T-cell (primary cell): ENCODE measurements at regions of chr7 and their contacts with region 1.

Region 1: GRCh38 chr7:116180302-116180701 is 30.0 kb upstream of the TES start:
- DNase-seq: peak in 18 of 35 experiments; percentile 3 to 76 (median 18)
- ATAC-seq: peak; percentile 79 to 81 (median 80)
- H3K4me3 ChIP-seq: no peak overlapping the region
- H3K4me3 Mint-ChIP-seq: no peak overlapping the region
- H3K27ac ChIP-seq: no peak overlapping the region
- H3K27ac Mint-ChIP-seq: no peak overlapping the region
- H3K4me1 ChIP-seq: no peaks in the 10 kb centered on the region
- H3K4me1 Mint-ChIP-seq: peaks cover 0 to 8% (median 8%) of the 10 kb centered on the region in 3 donors
- H3K27me3 ChIP-seq: no peaks in the 10 kb centered on the region
- H3K27me3 Mint-ChIP-seq: no peaks in the 10 kb centered on the region

Region 2: GRCh38 chr7:115293628-115294240 is 886.6 kb before region 1 on chr7:
- CTCF ChIA-PET with region 1: no interaction called
- POLR2A ChIA-PET with region 1: no interaction called
- DNase-seq: no peak
- ATAC-seq: no peak
- H3K4me3 ChIP-seq: no peak overlapping the region
- H3K4me3 Mint-ChIP-seq: no peak overlapping the region
- H3K27ac ChIP-seq: no peak overlapping the region
- H3K27ac Mint-ChIP-seq: no peak overlapping the region
- H3K4me1 ChIP-seq: no peaks in the 10 kb centered on the region
- H3K4me1 Mint-ChIP-seq: no peaks in the 10 kb centered on the region
- H3K27me3 ChIP-seq: peaks cover 0 to 3% of the 10 kb centered on the region in 2 experiments
- H3K27me3 Mint-ChIP-seq: peaks cover 1 to 4% of the 10 kb centered on the region in 2 donors

Region 3: GRCh38 chr7:115851291-115851690 is 329.0 kb before region 1 on chr7:
- CTCF ChIA-PET with region 1: no interaction called
- POLR2A ChIA-PET with region 1: no interaction called
- DNase-seq: peak in 1 of 35 experiments; percentile 41
- ATAC-seq: no peak
- H3K4me3 ChIP-seq: no peak overlapping the region
- H3K4me3 Mint-ChIP-seq: no peak overlapping the region
- H3K27ac ChIP-seq: no peak overlapping the region
- H3K27ac Mint-ChIP-seq: no peak overlapping the region
- H3K4me1 ChIP-seq: no peaks in the 10 kb centered on the region
- H3K4me1 Mint-ChIP-seq: no peaks in the 10 kb centered on the region
- H3K27me3 ChIP-seq: no peaks in the 10 kb centered on the region
- H3K27me3 Mint-ChIP-seq: peaks cover 1 to 8% of the 10 kb centered on the region in 2 donors

Region 4: DNA sequence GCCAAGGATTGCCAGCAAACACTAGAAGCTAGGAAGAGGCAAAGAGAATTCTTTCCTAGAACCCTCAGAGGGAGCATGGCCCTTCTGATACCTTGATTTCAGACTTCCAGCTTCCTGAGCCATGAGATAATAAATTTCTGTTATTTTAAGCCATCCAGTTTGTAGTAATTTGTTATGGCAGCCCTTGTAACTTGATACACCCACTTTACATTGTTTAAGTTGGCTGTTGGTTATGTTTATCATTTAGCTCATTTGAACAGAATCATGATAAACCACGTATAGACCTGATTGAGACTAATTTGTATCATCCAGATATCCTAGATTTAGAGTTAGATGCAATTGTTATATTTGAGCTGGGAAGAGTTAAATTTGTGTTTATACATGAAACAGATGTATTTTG is 20.7 kb after region 1 on chr7:
- CTCF ChIA-PET with region 1: interaction called, 4 to 10 read pairs
- POLR2A ChIA-PET with region 1: no interaction called
- DNase-seq: no peak
- ATAC-seq: no peak
- H3K4me3 ChIP-seq: no peak overlapping the region
- H3K4me3 Mint-ChIP-seq: no peak overlapping the region
- H3K27ac ChIP-seq: no peak overlapping the region
- H3K27ac Mint-ChIP-seq: no peak overlapping the region
- H3K4me1 ChIP-seq: no peaks in the 10 kb centered on the region
- H3K4me1 Mint-ChIP-seq: no peaks in the 10 kb centered on the region
- H3K27me3 ChIP-seq: no peaks in the 10 kb centered on the region
- H3K27me3 Mint-ChIP-seq: no peaks in the 10 kb centered on the region

Region 5: GRCh38 chr7:116218051-116218645 is 37.8 kb after region 1 on chr7:
- CTCF ChIA-PET with region 1: interaction called, 7 to 14 read pairs
- POLR2A ChIA-PET with region 1: interaction called, 3 read pairs
- DNase-seq: no peak
- ATAC-seq: no peak
- H3K4me3 ChIP-seq: no peak overlapping the region
- H3K4me3 Mint-ChIP-seq: peak overlapping the region; percentile 1 to 61 (median 28)
- H3K27ac ChIP-seq: no peak overlapping the region
- H3K27ac Mint-ChIP-seq: peak overlapping the region; percentile 66 to 75
- H3K4me1 ChIP-seq: peaks cover 23 to 78% of the 10 kb centered on the region in 2 experiments
- H3K4me1 Mint-ChIP-seq: peaks cover 91 to 92% (median 92%) of the 10 kb centered on the region in 3 donors
- H3K27me3 ChIP-seq: no peaks in the 10 kb centered on the region
- H3K27me3 Mint-ChIP-seq: no peaks in the 10 kb centered on the region

Region 6: GRCh38 chr7:116236020-116236630 is 55.8 kb after region 1 on chr7:
- CTCF ChIA-PET with region 1: interaction called, 243 to 450 read pairs
- POLR2A ChIA-PET with region 1: interaction called in 1 of 2 experiments, 3 read pairs
- DNase-seq: peak in 32 of 35 experiments; percentile 16 to 81 (median 58)
- ATAC-seq: peak; percentile 62 to 79 (median 70)
- H3K4me3 ChIP-seq: no peak overlapping the region
- H3K4me3 Mint-ChIP-seq: no peak overlapping the region
- H3K27ac ChIP-seq: no peak overlapping the region
- H3K27ac Mint-ChIP-seq: no peak overlapping the region
- H3K4me1 ChIP-seq: peaks cover 16 to 31% of the 10 kb centered on the region in 2 experiments
- H3K4me1 Mint-ChIP-seq: peaks cover 74 to 85% (median 83%) of the 10 kb centered on the region in 3 donors
- H3K27me3 ChIP-seq: no peaks in the 10 kb centered on the region
- H3K27me3 Mint-ChIP-seq: no peaks in the 10 kb centered on the region

Region 7: GRCh38 chr7:116588641-116589594 is 408.6 kb after region 1 on chr7:
- CTCF ChIA-PET with region 1: interaction called, 6 to 15 read pairs
- POLR2A ChIA-PET with region 1: no interaction called
- DNase-seq: peak in 1 of 35 experiments; percentile 64
- ATAC-seq: peak in 3 of 4 experiments; percentile 20 to 50 (median 43)
- H3K4me3 ChIP-seq: no peak overlapping the region
- H3K4me3 Mint-ChIP-seq: no peak overlapping the region
- H3K27ac ChIP-seq: no peak overlapping the region
- H3K27ac Mint-ChIP-seq: no peak overlapping the region
- H3K4me1 ChIP-seq: peaks cover 0 to 7% of the 10 kb centered on the region in 2 experiments
- H3K4me1 Mint-ChIP-seq: peaks cover 20 to 23% (median 20%) of the 10 kb centered on the region in 3 donors
- H3K27me3 ChIP-seq: peaks cover 0 to 8% of the 10 kb centered on the region in 2 experiments
- H3K27me3 Mint-ChIP-seq: peaks cover 22 to 25% of the 10 kb centered on the region in 2 donors

Region 8: DNA sequence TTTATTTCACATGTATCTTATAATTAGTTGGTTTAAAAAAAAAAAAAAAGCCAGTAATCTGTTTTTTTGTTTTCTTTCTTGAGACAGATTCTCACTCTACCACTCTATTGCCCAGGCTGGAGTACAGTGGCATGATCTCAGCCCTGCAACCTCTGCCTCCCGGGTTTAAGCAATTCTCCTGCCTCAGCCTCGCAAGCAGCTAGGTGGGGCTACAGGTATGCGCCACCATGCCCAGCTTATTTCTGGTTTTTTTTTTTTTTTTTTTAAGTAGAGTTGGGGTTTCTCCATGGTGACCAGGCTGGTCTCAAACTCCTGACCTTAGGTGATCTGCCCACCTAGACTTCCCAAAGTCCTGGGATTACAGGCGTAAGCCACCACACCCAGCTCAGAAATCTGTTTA is 648.0 kb after region 1 on chr7:
- CTCF ChIA-PET with region 1: no interaction called
- POLR2A ChIA-PET with region 1: no interaction called
- DNase-seq: no peak
- ATAC-seq: no peak
- H3K4me3 ChIP-seq: no peak overlapping the region
- H3K4me3 Mint-ChIP-seq: no peak overlapping the region
- H3K27ac ChIP-seq: no peak overlapping the region
- H3K27ac Mint-ChIP-seq: no peak overlapping the region
- H3K4me1 ChIP-seq: no peaks in the 10 kb centered on the region
- H3K4me1 Mint-ChIP-seq: no peaks in the 10 kb centered on the region
- H3K27me3 ChIP-seq: peaks cover 0 to 6% of the 10 kb centered on the region in 2 experiments
- H3K27me3 Mint-ChIP-seq: peaks cover 17 to 25% of the 10 kb centered on the region in 2 donors

Region 9: GRCh38 chr7:117219485-117219884 is 1039.2 kb after region 1 on chr7:
- CTCF ChIA-PET with region 1: no interaction called
- POLR2A ChIA-PET with region 1: no interaction called
- DNase-seq: no peak
- ATAC-seq: no peak
- H3K4me3 ChIP-seq: no peak overlapping the region
- H3K4me3 Mint-ChIP-seq: no peak overlapping the region
- H3K27ac ChIP-seq: no peak overlapping the region
- H3K27ac Mint-ChIP-seq: no peak overlapping the region
- H3K4me1 ChIP-seq: no peaks in the 10 kb centered on the region
- H3K4me1 Mint-ChIP-seq: no peaks in the 10 kb centered on the region
- H3K27me3 ChIP-seq: no peaks in the 10 kb centered on the region
- H3K27me3 Mint-ChIP-seq: no peaks in the 10 kb centered on the region